ENCODE measurements at regions of chr6 and their contacts with region 1.

Region 1: GRCh38 chr6:150813319-150813992 is 52.0 kb upstream of the MTHFD1L start:
- DNase-seq: no peak
- H3K4me3 Mint-ChIP-seq: no peak overlapping the region
- H3K27ac Mint-ChIP-seq: peak overlapping the region; percentile 24
- H3K4me1 Mint-ChIP-seq: peaks cover 18% of the 10 kb centered on the region
- H3K27me3 Mint-ChIP-seq: peaks cover 24% of the 10 kb centered on the region

Region 2: GRCh38 chr6:149941583-149942431 is 871.6 kb before region 1 on chr6 and contains the start of gene ULBP2:
- intact Hi-C with region 1: no loop called
- DNase-seq: peak; percentile 78
- H3K4me3 Mint-ChIP-seq: peak within 1 kb of the TSS; percentile 91
- H3K27ac Mint-ChIP-seq: peak within 1 kb of the TSS; percentile 55
- H3K4me1 Mint-ChIP-seq: peaks cover 21% of the 10 kb centered on the region
- H3K27me3 Mint-ChIP-seq: peaks cover 69% of the 10 kb centered on the region
- total RNA-seq, gene ULBP2: 0.14 and 0.18 TPM in 2 replicates

Region 3: DNA sequence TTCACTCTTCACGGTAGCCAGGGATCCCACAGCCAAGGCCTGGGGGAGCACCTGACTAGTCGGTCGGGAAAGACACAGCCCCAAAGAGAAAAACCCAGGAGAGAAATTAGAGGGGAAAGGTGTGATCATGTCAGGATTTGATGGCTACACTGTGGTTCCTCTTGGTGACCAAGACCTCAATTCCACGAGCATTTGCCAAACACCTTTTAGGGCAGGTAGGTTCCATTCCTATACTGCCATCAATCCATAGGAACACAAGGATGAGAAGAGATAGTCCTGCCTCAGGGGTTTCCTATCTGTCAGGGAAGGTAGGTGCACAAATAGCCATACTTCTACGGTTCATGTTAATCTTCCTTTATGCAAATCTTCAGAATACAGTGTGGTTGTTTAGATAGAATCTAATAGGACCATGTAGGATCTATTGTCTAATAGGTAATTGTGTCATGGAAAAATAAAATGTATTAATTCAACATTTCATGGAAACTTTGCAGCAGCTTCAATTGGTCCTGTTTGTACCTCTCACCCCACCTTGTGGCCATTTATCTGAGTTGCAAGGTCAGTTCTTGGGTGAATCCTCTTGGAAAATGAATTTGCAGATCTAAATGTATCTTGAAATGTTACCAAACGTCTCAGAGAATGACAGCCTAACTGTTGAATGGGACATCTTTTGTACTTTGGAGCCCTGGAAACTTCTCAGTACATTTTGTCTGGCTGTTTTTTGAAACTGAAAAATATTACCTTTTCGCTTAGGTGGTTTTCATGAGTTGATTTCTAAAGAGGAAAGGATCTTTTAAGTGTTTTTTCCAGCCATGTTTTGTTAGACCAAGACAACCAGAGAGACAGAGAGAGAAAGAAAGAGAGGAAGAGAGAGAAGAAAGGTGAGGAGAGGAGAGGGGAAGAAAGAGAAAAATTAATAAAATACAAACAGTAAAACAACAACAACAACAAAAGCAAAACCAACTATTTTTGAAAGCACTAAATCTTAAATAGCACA is 478.4 kb before region 1 on chr6:
- intact Hi-C with region 1: loop called (anchors 10 kb)
- DNase-seq: no peak
- H3K4me3 Mint-ChIP-seq: no peak overlapping the region
- H3K27ac Mint-ChIP-seq: no peak overlapping the region
- H3K4me1 Mint-ChIP-seq: no peaks in the 10 kb centered on the region
- H3K27me3 Mint-ChIP-seq: peaks cover 26% of the 10 kb centered on the region

Region 4: DNA sequence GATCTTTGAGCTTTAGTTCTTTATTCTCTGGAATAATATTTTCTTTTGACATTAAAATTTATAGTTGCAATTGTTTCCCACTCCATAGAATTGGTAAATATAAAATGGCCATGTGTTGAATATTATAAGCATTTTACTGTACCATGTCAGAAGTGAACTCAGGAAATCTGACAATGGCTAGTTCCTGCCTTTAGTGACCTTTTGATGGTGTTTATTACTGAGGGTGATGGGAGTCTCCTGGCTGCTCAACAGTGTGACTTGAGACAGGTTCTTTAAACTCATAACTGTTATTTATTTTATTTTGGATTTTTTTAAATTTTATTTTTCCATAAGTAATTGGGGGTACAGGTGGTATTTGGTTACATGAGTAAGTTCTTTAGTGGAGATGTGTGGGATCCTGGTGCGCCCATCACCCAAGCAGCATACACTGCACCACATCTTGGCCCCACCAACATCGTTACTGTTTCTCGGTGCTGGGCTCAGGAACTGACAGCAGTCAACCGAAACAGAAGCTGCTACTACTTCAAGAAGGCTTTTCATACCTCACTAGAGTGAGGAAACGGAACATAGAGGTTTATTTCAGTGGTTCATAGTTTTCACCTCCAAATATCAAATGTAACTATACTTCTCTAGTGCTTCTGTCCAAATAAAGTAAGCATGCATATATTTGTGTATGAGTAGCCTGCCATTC is 123.4 kb before region 1 on chr6:
- intact Hi-C with region 1: loop called (anchors 2 kb)
- DNase-seq: no peak
- H3K4me3 Mint-ChIP-seq: no peak overlapping the region
- H3K27ac Mint-ChIP-seq: no peak overlapping the region
- H3K4me1 Mint-ChIP-seq: no peaks in the 10 kb centered on the region
- H3K27me3 Mint-ChIP-seq: peaks cover 1% of the 10 kb centered on the region

Measured in activated T-helper 2 cell treated with anti-CD3 and anti-CD28 coated beads, Interferon-gamma antibody, Interleukin-2, Interleukin-4, amounts not matched to agents 10 μg/mL and 5 μg/mL and 100 μg/mL, durations not matched to agents 14 hours and 24 hours and 36 hours (primary cell).